ENCODE measurements at regions of chr12 and their contacts with region 1.

Region 1: GRCh38 chr12:19288603-19289244 is 150.6 kb upstream of the AEBP2 start:
- DNase-seq: peak; percentile 46
- H3K4me3 Mint-ChIP-seq: no peak overlapping the region
- H3K27ac Mint-ChIP-seq: no peak overlapping the region
- H3K4me1 Mint-ChIP-seq: no peaks in the 10 kb centered on the region
- H3K27me3 Mint-ChIP-seq: no peaks in the 10 kb centered on the region
- CTCF ChIP-seq: peak; percentile 46

Region 2: GRCh38 chr12:18861287-18861858 is 427.4 kb before region 1 on chr12:
- CTCF ChIA-PET with region 1: interaction called, 4 read pairs
- POLR2A ChIA-PET with region 1: no interaction called
- intact Hi-C with region 1: loop called (anchors 1 kb)
- DNase-seq: peak; percentile 64
- H3K4me3 Mint-ChIP-seq: no peak overlapping the region
- H3K27ac Mint-ChIP-seq: no peak overlapping the region
- H3K4me1 Mint-ChIP-seq: peaks cover 15% of the 10 kb centered on the region
- H3K27me3 Mint-ChIP-seq: no peaks in the 10 kb centered on the region
- CTCF ChIP-seq: peak; percentile 78

Region 3: DNA sequence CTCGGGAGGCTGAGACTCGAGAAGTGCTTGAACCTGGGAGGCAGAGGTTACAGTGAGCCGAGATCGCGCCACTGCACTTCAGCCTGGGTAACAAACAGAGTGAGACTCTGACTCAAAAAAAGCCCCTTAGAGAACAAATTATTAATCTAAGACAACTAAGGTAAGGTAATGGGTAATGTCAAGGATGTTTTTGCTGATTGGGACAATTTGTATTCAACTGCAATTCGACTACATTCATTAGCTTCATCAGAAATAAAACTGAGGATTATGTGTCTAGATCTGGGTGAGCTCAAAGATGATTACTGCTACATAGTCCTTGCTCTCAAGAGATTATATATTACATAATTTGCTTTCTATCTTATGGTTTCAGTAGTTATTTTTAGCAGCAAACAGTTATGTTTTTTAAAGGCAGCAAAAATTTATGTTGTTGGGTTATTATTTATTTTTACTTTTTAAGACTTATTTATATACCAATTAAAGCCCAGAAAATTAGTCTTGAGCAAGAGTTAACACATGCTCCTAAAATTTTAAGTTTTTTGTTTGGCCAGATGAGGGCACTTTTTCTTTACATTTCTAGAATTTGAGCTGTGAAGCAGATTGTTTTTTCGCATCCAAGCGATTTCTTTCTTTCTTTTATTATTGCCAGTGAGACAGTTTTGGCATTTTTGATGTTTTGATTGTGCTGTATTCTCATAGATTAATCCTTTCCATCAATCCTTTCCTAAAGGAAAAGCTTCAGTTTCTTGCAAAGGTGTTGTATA is 106.9 kb before region 1 on chr12:
- CTCF ChIA-PET with region 1: interaction called, 4 read pairs
- POLR2A ChIA-PET with region 1: no interaction called
- intact Hi-C with region 1: loop called (anchors 1 kb)
- DNase-seq: no peak
- H3K4me3 Mint-ChIP-seq: no peak overlapping the region
- H3K27ac Mint-ChIP-seq: no peak overlapping the region
- H3K4me1 Mint-ChIP-seq: peaks cover 5% of the 10 kb centered on the region
- H3K27me3 Mint-ChIP-seq: no peaks in the 10 kb centered on the region
- CTCF ChIP-seq: peak; percentile 21

Region 4: GRCh38 chr12:19323805-19324204 is 35.1 kb after region 1 on chr12:
- CTCF ChIA-PET with region 1: no interaction called
- POLR2A ChIA-PET with region 1: no interaction called
- intact Hi-C with region 1: no loop called
- DNase-seq: no peak
- H3K4me3 Mint-ChIP-seq: no peak overlapping the region
- H3K27ac Mint-ChIP-seq: no peak overlapping the region
- H3K4me1 Mint-ChIP-seq: no peaks in the 10 kb centered on the region
- H3K27me3 Mint-ChIP-seq: no peaks in the 10 kb centered on the region
- CTCF ChIP-seq: no peak

Region 5: GRCh38 chr12:19439059-19440018 is 150.6 kb after region 1 on chr12 and contains the start of gene AEBP2:
- CTCF ChIA-PET with region 1: no interaction called
- POLR2A ChIA-PET with region 1: no interaction called
- intact Hi-C with region 1: loop called (anchors 5 kb)
- DNase-seq: peak; percentile 91
- H3K4me3 Mint-ChIP-seq: peak within 1 kb of the TSS; percentile 96
- H3K27ac Mint-ChIP-seq: peak within 1 kb of the TSS; percentile 90
- H3K4me1 Mint-ChIP-seq: peaks cover 1% of the 10 kb centered on the region
- H3K27me3 Mint-ChIP-seq: no peaks in the 10 kb centered on the region
- CTCF ChIP-seq: no peak
- total RNA-seq, gene AEBP2: 41.0 and 49.2 TPM in 2 replicates

Region 6: DNA sequence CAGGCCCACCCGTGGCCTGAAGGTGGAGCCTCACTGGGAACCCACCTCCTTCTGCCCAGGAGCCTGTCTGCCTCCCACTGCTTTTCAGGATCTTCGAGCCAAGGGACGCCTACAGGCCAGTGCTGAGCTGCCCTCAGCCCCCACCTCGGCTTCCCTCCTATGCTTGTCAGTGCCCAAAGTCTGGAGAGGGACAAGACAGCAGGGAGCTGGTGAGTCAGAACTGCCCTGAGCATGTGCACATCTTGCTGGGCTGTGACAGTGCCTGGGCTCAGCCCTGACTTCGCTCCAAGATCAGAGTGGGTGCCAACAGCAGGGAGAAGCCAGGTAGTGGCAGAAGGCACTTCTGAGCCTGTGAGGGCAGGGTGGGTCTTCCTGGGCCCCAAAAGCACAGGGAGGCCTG is 437.4 kb after region 1 on chr12:
- CTCF ChIA-PET with region 1: no interaction called
- POLR2A ChIA-PET with region 1: no interaction called
- intact Hi-C with region 1: no loop called
- DNase-seq: no peak
- H3K4me3 Mint-ChIP-seq: no peak overlapping the region
- H3K27ac Mint-ChIP-seq: no peak overlapping the region
- H3K4me1 Mint-ChIP-seq: no peaks in the 10 kb centered on the region
- H3K27me3 Mint-ChIP-seq: no peaks in the 10 kb centered on the region
- CTCF ChIP-seq: no peak

Region 7: DNA sequence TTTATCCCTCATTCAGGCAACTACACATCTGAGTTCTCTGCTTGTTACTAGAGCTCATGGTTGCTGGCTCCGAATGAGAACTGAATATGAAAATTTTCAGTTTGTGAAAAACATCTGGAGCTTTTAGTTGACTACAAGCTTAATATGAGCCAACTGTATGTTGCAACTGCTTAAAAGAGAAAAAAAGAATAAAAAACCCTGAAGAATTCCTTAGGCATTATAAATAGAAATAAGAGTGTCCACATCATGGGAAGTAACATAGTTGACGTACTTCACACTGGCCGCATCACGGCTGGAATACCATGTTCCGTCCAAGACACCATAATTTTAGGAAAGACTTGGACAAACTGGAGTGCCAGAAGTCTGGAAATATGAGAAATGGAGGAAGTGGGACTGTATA is 1137.5 kb after region 1 on chr12:
- CTCF ChIA-PET with region 1: no interaction called
- POLR2A ChIA-PET with region 1: no interaction called
- intact Hi-C with region 1: no loop called
- DNase-seq: no peak
- H3K4me3 Mint-ChIP-seq: no peak overlapping the region
- H3K27ac Mint-ChIP-seq: no peak overlapping the region
- H3K4me1 Mint-ChIP-seq: no peaks in the 10 kb centered on the region
- H3K27me3 Mint-ChIP-seq: peaks cover 73% of the 10 kb centered on the region
- CTCF ChIP-seq: no peak